ENCODE measurements at regions of chr14 and their contacts with region 1.

Region 1: DNA sequence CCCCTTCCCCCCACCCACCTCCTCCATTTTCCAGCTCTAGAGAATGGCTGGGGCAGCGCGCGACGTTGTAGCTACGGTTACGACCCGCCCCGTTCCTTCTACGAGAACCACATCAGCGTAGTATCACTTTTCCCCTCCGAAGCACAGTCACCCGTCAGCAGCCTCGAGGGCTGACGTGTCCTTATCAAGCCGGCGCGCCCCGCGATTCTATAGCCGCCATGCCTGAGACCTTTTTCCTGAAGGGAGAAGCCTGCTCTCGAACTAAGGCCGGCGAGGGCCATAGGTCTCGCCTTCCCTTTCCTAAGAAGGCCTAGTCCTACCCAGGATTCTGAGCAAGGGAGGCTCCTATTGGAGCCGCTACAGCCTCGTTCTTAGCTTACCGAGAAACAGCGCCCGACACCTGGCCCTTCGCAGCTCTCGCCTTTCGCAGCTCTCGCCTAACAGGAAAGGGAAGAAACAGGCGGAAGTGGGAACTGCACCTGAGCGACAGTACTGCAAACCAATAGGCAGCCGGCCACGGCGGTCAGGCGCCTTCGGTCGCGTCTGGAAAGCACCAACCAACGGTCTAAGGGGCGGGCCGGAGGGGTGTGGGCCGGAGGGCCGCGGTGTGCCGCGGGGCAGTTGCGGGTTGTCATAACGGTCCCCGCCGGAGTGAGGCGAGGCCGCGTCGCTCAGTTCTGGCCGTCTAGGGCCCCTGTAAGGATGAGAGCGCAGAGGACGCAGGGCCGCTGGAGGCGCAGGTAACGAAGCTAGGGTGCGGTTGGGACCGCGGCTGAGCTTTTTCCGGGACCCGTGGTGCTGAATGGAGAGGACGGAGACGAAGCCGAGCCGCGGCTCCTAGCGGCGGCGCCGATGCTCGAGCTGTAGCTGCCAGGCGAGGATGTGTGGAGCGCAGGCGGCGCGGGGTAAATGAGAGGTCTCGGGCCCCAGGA is at the starts of genes MGAT2 and RPL36AL:
- DNase-seq: peak; percentile 95 to 96
- ATAC-seq: peak; percentile 83 to 95 (median 89)
- H3K4me3 ChIP-seq: peak within 1 kb of the TSS; percentile 83
- H3K4me3 Mint-ChIP-seq: peak within 1 kb of the TSS; percentile 98
- H3K27ac ChIP-seq: peak within 1 kb of the TSS; percentile 95
- H3K27ac Mint-ChIP-seq: peak within 1 kb of the TSS; percentile 99
- H3K4me1 ChIP-seq: peaks cover 29% of the 10 kb centered on the region
- H3K4me1 Mint-ChIP-seq: peaks cover 41 to 58% of the 10 kb centered on the region in 2 donors
- H3K27me3 ChIP-seq: no peaks in the 10 kb centered on the region
- H3K27me3 Mint-ChIP-seq: no peaks in the 10 kb centered on the region
- CTCF ChIP-seq: peak; percentile 18
- total RNA-seq, gene MGAT2: 29.9 to 34.8 (median 33.8) TPM
- total RNA-seq, gene RPL36AL: 126 to 166 (median 150) TPM

Region 2: GRCh38 chr14:49585803-49586672 is 34.4 kb before region 1 on chr14 and contains the start of gene RPS29:
- intact Hi-C with region 1: loop called (anchors 1 kb)
- DNase-seq: peak; percentile 100
- ATAC-seq: peak; percentile 83 to 95 (median 85)
- H3K4me3 ChIP-seq: peak within 1 kb of the TSS; percentile 87
- H3K4me3 Mint-ChIP-seq: peak within 1 kb of the TSS; percentile 98
- H3K27ac ChIP-seq: peak within 1 kb of the TSS; percentile 96
- H3K27ac Mint-ChIP-seq: peak within 1 kb of the TSS; percentile 98 to 99
- H3K4me1 ChIP-seq: peaks cover 19% of the 10 kb centered on the region
- H3K4me1 Mint-ChIP-seq: peaks cover 44 to 54% of the 10 kb centered on the region in 2 donors
- H3K27me3 ChIP-seq: no peaks in the 10 kb centered on the region
- H3K27me3 Mint-ChIP-seq: no peaks in the 10 kb centered on the region
- CTCF ChIP-seq: no peak
- total RNA-seq, gene RPS29: 1,124 to 1,711 (median 1,654) TPM

Region 3: DNA sequence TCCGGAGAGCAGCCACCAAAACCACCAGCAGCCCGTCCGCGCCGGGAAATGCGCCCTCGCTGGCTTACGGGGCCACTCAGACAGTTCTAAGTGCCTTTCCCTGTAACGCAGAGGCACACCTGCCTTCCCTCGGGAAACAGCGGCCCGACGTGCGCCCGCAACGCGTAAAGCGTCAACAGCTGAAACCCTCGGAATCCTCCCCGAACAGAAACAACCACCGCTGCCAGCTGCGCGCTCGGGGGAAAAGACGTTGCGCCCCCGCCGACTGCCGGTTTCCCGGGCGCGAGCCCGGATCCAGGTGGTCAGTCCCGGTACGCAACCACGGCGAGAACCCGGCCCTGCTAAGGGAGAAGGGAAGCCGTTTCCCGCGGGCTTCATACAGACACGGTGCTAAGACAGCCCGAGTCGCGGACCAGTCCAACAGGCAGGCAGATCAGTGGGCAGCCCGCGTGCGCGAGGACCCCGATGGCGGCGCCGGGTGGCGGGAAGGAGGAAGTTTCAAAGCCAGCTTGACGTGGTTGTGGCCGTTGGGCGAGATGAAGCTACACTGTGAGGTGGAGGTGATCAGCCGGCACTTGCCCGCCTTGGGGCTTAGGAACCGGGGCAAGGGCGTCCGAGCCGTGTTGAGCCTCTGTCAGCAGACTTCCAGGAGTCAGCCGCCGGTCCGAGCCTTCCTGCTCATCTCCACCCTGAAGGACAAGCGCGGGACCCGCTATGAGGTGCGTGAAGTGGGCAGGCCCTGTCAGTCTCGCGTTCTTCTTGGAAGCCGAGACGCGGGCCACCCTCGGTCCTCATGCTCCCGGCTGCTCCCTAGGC is 21.8 kb before region 1 on chr14 and contains the start of gene LRR1:
- intact Hi-C with region 1: loop called (anchors 1 kb)
- DNase-seq: peak; percentile 87 to 90
- ATAC-seq: peak; percentile 86 to 95 (median 90)
- H3K4me3 ChIP-seq: peak within 1 kb of the TSS; percentile 83
- H3K4me3 Mint-ChIP-seq: peak within 1 kb of the TSS; percentile 98
- H3K27ac ChIP-seq: peak within 1 kb of the TSS; percentile 94
- H3K27ac Mint-ChIP-seq: peak within 1 kb of the TSS; percentile 97 to 98
- H3K4me1 ChIP-seq: peaks cover 22% of the 10 kb centered on the region
- H3K4me1 Mint-ChIP-seq: peaks cover 24 to 26% of the 10 kb centered on the region in 2 donors
- H3K27me3 ChIP-seq: no peaks in the 10 kb centered on the region
- H3K27me3 Mint-ChIP-seq: no peaks in the 10 kb centered on the region
- CTCF ChIP-seq: no peak
- total RNA-seq, gene LRR1: 8.1 to 11.7 (median 8.7) TPM

Region 4: DNA sequence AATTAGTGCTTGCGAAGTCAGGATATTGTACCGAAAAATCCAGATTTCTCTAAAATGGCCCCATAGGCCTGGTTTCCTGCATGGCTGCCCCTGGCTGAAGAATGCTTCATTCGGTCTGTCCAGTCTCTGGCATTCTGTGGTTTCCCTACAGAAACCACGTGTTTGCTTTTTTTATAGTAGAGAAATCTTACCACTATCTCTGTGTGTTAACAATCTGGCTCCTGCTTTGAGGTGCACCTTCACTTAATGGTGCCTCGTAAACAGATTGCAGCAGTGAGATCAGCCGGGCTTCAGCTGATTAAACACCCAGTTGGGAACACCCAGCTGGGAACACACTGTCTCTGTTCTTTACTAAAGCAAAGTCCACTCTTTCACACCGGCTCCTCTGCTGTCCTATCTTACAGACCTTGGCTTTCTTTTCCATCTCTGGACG is 21.3 kb after region 1 on chr14:
- intact Hi-C with region 1: no loop called
- DNase-seq: no peak
- ATAC-seq: peak in 1 of 3 donors; percentile 15
- H3K4me3 ChIP-seq: no peak overlapping the region
- H3K4me3 Mint-ChIP-seq: no peak overlapping the region
- H3K27ac ChIP-seq: peak overlapping the region; percentile 31
- H3K27ac Mint-ChIP-seq: peak overlapping the region; percentile 57 to 79
- H3K4me1 ChIP-seq: peaks cover 10% of the 10 kb centered on the region
- H3K4me1 Mint-ChIP-seq: peaks cover 22 to 33% of the 10 kb centered on the region in 2 donors
- H3K27me3 ChIP-seq: no peaks in the 10 kb centered on the region
- H3K27me3 Mint-ChIP-seq: no peaks in the 10 kb centered on the region
- CTCF ChIP-seq: no peak

Region 5: GRCh38 chr14:49692811-49693734 is 72.6 kb after region 1 on chr14 and contains the start of gene KLHDC1:
- intact Hi-C with region 1: loop called (anchors 2 kb)
- DNase-seq: peak; percentile 73 to 90
- ATAC-seq: peak; percentile 81 to 88 (median 81)
- H3K4me3 ChIP-seq: peak within 1 kb of the TSS; percentile 65
- H3K4me3 Mint-ChIP-seq: peak within 1 kb of the TSS; percentile 82
- H3K27ac ChIP-seq: peak within 1 kb of the TSS; percentile 66
- H3K27ac Mint-ChIP-seq: peak within 1 kb of the TSS; percentile 76 to 86
- H3K4me1 ChIP-seq: peaks cover 9% of the 10 kb centered on the region
- H3K4me1 Mint-ChIP-seq: peaks cover 28 to 30% of the 10 kb centered on the region in 2 donors
- H3K27me3 ChIP-seq: no peaks in the 10 kb centered on the region
- H3K27me3 Mint-ChIP-seq: no peaks in the 10 kb centered on the region
- CTCF ChIP-seq: no peak
- total RNA-seq, gene KLHDC1: 6.3 to 7.0 (median 6.9) TPM

Region 6: GRCh38 chr14:50311975-50312733 is 691.7 kb after region 1 on chr14 and contains the starts of genes DMAC2L and L2HGDH:
- intact Hi-C with region 1: loop called (anchors 10 kb)
- DNase-seq: peak; percentile 89 to 94
- ATAC-seq: peak; percentile 90 to 98 (median 90)
- H3K4me3 ChIP-seq: peak within 1 kb of the TSS; percentile 84
- H3K4me3 Mint-ChIP-seq: peak within 1 kb of the TSS; percentile 94
- H3K27ac ChIP-seq: peak within 1 kb of the TSS; percentile 89
- H3K27ac Mint-ChIP-seq: peak within 1 kb of the TSS; percentile 94 to 95
- H3K4me1 ChIP-seq: peaks cover 18% of the 10 kb centered on the region
- H3K4me1 Mint-ChIP-seq: peaks cover 27 to 46% of the 10 kb centered on the region in 2 donors
- H3K27me3 ChIP-seq: no peaks in the 10 kb centered on the region
- H3K27me3 Mint-ChIP-seq: no peaks in the 10 kb centered on the region
- CTCF ChIP-seq: no peak
- total RNA-seq, gene DMAC2L: 24.7 to 28.7 (median 25.0) TPM
- total RNA-seq, gene L2HGDH: 4.2 to 5.6 (median 5.4) TPM